ENCODE measurements at regions of chr9 and their contacts with region 1.

Region 1: DNA sequence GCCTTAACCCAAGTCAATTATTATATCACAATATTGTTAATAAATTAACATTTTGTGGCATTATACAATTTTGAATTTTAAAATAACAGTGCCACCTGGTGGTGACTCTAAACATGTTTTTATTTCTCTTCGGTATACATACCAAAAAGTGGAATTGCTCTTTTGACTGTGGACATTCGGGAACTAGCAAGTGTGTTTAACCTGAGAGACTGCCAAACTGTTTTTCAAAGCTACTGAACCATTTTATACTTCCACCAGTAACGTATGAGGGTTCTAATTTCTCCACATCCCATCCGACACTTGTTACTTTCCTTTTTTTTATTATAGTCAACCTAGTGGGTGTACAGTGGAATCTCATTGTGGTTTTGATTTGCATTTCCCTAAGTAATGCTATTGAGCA is 18.3 kb upstream of the HSDL2 start:
- DNase-seq: peak; percentile 65
- ATAC-seq: peak; percentile 37
- H3K4me3 ChIP-seq: no peak overlapping the region
- H3K27ac ChIP-seq: no peak overlapping the region
- H3K4me1 ChIP-seq: peaks cover 13% of the 10 kb centered on the region; the same call in 1 of the 2 replicates
- H3K27me3 ChIP-seq: no peaks in the 10 kb centered on the region
- CTCF ChIP-seq: peak; percentile 62

Region 2: GRCh38 chr9:112086627-112087026 is 275.0 kb before region 1 on chr9:
- CTCF ChIA-PET with region 1: interaction called, 5 read pairs
- POLR2A ChIA-PET with region 1: interaction called, 4 read pairs
- intact Hi-C with region 1: loop called (anchors 2 kb)
- DNase-seq: peak; percentile 51
- ATAC-seq: no peak
- H3K4me3 ChIP-seq: no peak overlapping the region
- H3K27ac ChIP-seq: no peak overlapping the region
- H3K4me1 ChIP-seq: peaks cover 6% of the 10 kb centered on the region; the same call in 1 of the 2 replicates
- H3K27me3 ChIP-seq: no peaks in the 10 kb centered on the region
- CTCF ChIP-seq: peak; percentile 56

Region 3: GRCh38 chr9:112097712-112098688 is 263.6 kb before region 1 on chr9:
- CTCF ChIA-PET with region 1: no interaction called
- POLR2A ChIA-PET with region 1: no interaction called
- intact Hi-C with region 1: loop called (anchors 1 kb)
- DNase-seq: peak; percentile 75
- ATAC-seq: peak; percentile 89
- H3K4me3 ChIP-seq: no peak overlapping the region
- H3K27ac ChIP-seq: no peak overlapping the region
- H3K4me1 ChIP-seq: no peaks in the 10 kb centered on the region
- H3K27me3 ChIP-seq: no peaks in the 10 kb centered on the region
- CTCF ChIP-seq: peak; percentile 81

Region 4: GRCh38 chr9:112112941-112113681 is 248.5 kb before region 1 on chr9:
- CTCF ChIA-PET with region 1: interaction called, 8 read pairs
- POLR2A ChIA-PET with region 1: no interaction called
- intact Hi-C with region 1: loop called (anchors 1 kb)
- DNase-seq: peak; percentile 84
- ATAC-seq: peak; percentile 82
- H3K4me3 ChIP-seq: peak overlapping the region; percentile 33; the same call in 1 of the 2 replicates
- H3K27ac ChIP-seq: peak overlapping the region; percentile 100
- H3K4me1 ChIP-seq: peaks cover 43% of the 10 kb centered on the region
- H3K27me3 ChIP-seq: no peaks in the 10 kb centered on the region
- CTCF ChIP-seq: peak; percentile 73

Region 5: GRCh38 chr9:112166172-112167140 is 195.1 kb before region 1 on chr9:
- CTCF ChIA-PET with region 1: no interaction called
- POLR2A ChIA-PET with region 1: no interaction called
- intact Hi-C with region 1: loop called (anchors 1 kb)
- DNase-seq: peak; percentile 85
- ATAC-seq: peak; percentile 91
- H3K4me3 ChIP-seq: no peak overlapping the region
- H3K27ac ChIP-seq: peak overlapping the region; percentile 62
- H3K4me1 ChIP-seq: peaks cover 50% of the 10 kb centered on the region
- H3K27me3 ChIP-seq: no peaks in the 10 kb centered on the region
- CTCF ChIP-seq: peak; percentile 56

Region 6: DNA sequence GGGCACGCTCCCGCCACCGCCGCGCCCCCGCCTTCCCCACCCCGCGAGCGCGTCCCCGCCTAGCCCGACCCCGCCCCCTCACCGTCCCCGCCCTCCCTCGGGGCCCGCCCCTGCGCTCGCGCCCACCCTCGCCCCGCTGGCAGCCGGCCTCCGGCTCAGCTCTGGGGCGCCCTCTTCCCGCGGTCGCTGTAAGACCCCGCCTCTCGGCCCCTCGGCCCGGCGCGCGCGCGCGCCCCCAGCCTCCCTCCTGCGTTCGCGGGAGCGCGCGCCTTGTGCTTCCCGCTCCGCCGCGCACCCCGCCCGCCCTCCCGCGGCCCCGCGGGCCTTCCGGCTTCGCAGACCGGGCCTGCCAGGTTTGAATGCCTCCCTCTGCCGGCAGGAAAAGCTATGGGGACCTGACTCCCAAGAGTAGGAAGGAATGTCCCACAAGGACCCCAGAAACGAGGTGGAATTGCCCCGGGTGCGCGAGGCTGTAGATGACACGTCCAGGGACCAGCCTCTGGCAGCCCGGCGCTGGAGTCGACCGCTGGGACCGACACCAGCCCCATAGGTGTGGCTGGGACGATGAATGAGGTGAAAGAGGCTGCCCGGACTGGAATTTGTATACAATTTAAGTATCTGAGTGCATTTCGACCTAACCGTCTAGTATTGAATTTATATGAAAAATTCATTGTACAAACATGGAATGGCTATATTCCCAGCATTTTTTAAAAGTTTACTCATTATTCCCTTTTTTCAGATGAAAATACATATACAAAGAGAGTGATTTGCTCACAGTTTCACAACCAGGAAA is 27.8 kb before region 1 on chr9:
- CTCF ChIA-PET with region 1: interaction called, 6 read pairs
- POLR2A ChIA-PET with region 1: no interaction called
- intact Hi-C with region 1: loop called (anchors 2 kb)
- DNase-seq: peak; percentile 93
- ATAC-seq: peak; percentile 74
- H3K4me3 ChIP-seq: peak overlapping the region; percentile 98
- H3K27ac ChIP-seq: peak overlapping the region; percentile 82
- H3K4me1 ChIP-seq: peaks cover 22% of the 10 kb centered on the region
- H3K27me3 ChIP-seq: no peaks in the 10 kb centered on the region
- CTCF ChIP-seq: peak; percentile 44